Transverse colon (tissue), 4 donors: ENCODE measurements at regions of chr5 and their contacts with region 1.

Region 1: GRCh38 chr5:132410451-132411381 is 41.2 kb downstream of the SLC22A5 start:
- DNase-seq: peak; percentile 88
- H3K4me3 ChIP-seq: peak overlapping the region; percentile 55 to 81 (median 73)
- H3K27ac ChIP-seq: peak overlapping the region; percentile 96 to 99 (median 99)
- H3K4me1 ChIP-seq: peaks cover 26 to 62% (median 50%) of the 10 kb centered on the region in 4 donors
- H3K27me3 ChIP-seq: no peaks in the 10 kb centered on the region
- CTCF ChIP-seq: peak; percentile 58 to 83 (median 62)
- EP300 ChIP-seq: no peak
- POLR2A ChIP-seq: peak; percentile 69

Region 2: DNA sequence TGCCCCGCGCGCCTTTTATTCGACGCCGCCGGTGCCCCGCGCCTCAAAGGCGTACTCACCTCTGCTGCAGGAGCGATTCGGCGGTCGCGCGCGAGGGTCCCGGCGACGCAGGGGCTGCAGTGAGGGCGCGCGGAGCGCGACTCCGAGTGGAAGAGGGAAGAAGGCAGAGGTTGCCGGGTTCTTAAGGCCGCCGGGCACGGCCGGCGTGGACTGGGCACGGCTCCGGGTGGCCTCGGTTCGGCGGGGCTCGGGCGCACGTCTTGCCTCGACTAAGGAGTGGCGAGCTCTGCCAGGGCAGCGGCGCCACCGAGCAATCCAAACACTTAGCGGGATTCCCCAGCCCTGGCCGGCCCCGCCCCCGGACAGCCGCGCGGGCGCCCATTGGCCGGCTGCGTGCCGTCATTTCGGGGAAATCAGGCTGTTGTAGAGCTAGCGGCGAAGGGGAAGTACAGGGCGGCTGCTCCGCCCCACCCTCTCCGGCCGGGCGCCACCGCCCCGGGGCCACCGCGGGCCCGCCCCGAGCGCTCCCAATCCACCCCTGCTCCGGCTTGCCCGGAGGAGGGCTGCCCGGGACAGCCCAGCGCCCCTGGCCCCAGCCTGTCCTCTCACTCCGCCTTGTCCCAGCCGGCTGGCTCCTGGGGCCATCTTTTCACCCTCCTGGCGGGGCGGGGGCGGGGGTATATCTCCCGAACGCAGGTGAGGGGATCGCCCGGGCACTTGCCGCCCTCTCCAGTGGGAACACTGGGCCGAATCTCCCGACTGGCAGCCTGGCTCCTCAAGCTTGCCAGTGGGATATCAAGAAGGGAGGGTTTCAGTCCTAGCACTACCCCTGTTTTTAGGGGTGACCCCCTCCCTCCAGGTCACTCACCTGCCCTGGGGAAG is 80.0 kb after region 1 on chr5 and contains the start of gene IRF1:
- in situ Hi-C with region 1: loop called in 3 of 4 experiments (anchors 5 to 10 kb)
- intact Hi-C with region 1: loop called (anchors 5 kb)
- DNase-seq: peak; percentile 98
- H3K4me3 ChIP-seq: peak within 1 kb of the TSS; percentile 80 to 96 (median 90)
- H3K27ac ChIP-seq: peak within 1 kb of the TSS; percentile 98 to 100 (median 100)
- H3K4me1 ChIP-seq: peaks cover 43 to 67% (median 51%) of the 10 kb centered on the region in 4 donors
- H3K27me3 ChIP-seq: no peaks in the 10 kb centered on the region
- CTCF ChIP-seq: no peak
- EP300 ChIP-seq: peak; percentile 76
- POLR2A ChIP-seq: peak; percentile 99
- total RNA-seq, gene IRF1: 40.8 to 86.9 (median 65.5) TPM

Region 3: DNA sequence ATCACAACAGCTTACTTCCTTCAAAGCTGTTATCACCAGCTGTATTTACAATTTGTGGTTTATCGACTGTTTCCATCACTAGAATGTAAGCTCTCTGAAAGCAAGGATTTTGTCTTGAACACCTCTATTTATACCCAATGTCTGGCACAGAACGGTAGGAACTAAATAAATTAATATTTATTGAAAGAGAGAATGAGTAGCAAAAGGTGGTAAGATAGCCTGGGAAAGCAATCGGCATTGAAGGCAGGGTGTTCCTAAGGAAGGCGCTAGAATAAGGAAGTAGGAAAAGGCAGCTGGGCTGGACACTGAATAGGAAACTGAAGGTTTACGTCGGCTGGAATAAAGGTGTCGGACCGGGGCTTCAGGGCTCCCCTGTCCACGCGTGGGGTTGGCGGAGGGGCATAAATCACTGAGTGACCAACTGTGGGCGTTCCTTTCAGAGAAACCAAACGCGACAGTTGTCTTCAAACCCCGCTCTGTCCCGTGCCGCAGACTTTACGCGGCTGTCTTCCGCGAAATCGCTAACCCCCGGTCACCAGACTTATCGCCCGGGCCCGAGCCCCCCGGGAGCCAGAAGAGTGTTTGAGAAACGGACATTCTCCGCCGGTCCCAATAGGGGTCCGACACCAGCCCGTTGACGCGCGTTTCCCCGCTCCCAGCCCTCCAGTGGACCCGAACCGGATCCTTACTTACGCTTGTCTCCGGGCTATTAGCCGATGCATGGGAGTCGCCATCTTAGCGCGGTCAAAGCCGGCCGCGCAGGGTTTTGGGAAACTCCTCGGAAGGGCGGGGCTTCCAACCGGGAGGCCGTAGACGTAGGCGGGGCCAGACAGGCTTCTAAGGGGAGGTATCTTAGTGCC is 615.3 kb after region 1 on chr5 and contains the start of gene ZCCHC10:
- in situ Hi-C with region 1: no loop called
- intact Hi-C with region 1: loop called (anchors 10 kb)
- DNase-seq: peak; percentile 95
- H3K4me3 ChIP-seq: peak within 1 kb of the TSS; percentile 82 to 95 (median 86)
- H3K27ac ChIP-seq: peak within 1 kb of the TSS; percentile 93 to 99 (median 96)
- H3K4me1 ChIP-seq: peaks cover 3 to 32% (median 15%) of the 10 kb centered on the region in 4 donors
- H3K27me3 ChIP-seq: no peaks in the 10 kb centered on the region
- CTCF ChIP-seq: no peak
- EP300 ChIP-seq: no peak
- POLR2A ChIP-seq: peak; percentile 82
- total RNA-seq, gene ZCCHC10: 19.1 to 37.4 (median 25.7) TPM

Region 4: GRCh38 chr5:133370036-133370831 is 959.5 kb after region 1 on chr5:
- in situ Hi-C with region 1: no loop called
- intact Hi-C with region 1: no loop called
- DNase-seq: no peak
- H3K4me3 ChIP-seq: no peak overlapping the region
- H3K27ac ChIP-seq: no peak overlapping the region
- H3K4me1 ChIP-seq: no peaks in the 10 kb centered on the region
- H3K27me3 ChIP-seq: no peaks in the 10 kb centered on the region
- CTCF ChIP-seq: no peak
- EP300 ChIP-seq: no peak
- POLR2A ChIP-seq: no peak